ENCODE measurements at regions of chr2 and their contacts with region 1.

Region 1: DNA sequence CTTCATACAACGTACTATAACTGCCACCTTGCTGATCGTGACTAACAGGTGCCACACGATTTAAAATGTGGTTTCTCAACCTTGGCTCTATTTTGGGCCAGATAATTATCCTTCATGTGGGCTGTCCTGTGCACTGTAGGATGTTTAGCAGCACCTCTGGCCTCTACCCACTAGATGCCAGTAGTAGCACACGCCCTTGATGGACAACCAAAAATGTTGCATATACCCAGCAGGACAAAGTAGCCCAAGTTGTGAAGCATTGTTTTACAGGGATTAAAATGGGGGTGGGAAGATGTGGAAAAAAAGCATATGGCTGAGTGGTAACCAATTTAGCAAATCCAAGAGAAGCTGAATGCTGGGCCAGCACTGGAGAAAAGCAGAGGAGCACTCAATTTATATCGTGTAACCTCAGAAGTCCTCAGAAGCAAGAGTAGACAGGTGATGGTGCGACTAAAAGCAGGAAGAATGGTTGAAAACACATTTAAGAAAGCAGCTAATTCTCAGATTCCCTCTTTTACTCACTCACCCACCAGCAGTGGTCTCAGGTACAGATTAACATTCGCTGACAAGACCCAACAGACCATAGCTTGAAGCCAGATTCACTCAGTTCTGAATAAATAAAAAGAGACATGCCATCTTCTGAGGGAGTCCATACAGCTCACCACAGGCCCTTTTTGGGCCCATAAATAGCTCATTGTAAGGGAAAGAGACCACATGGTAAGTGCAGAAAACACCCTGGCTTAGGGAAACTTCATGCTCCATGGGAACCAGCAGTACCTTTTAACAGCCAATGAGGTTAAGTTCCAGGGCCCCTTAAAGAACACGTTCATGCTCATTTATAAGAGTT is 50.6 kb downstream of the RAPH1 start:
- DNase-seq: peak; percentile 46
- ATAC-seq: peak; percentile 94
- H3K4me3 ChIP-seq: no peak overlapping the region
- H3K27ac ChIP-seq: no peak overlapping the region
- H3K4me1 ChIP-seq: 0 out of 2 replicates have a peak, but pooled peaks cover under 1% of the 10 kb centered on the region
- H3K27me3 ChIP-seq: no peaks in the 10 kb centered on the region
- CTCF ChIP-seq: peak; percentile 77
- EP300 ChIP-seq: no peak
- POLR2A ChIP-seq: no peak
- RAD21 ChIP-seq: peak; percentile 83

Region 2: GRCh38 chr2:203909261-203909967 is 424.9 kb after region 1 on chr2:
- CTCF ChIA-PET with region 1: interaction called, 10 read pairs
- POLR2A ChIA-PET with region 1: no interaction called
- in situ Hi-C with region 1: loop called (anchors 10 kb)
- intact Hi-C with region 1: loop called (anchors 1 kb)
- DNase-seq: peak; percentile 41
- ATAC-seq: peak; percentile 92
- H3K4me3 ChIP-seq: peak overlapping the region in 1 of 3 experiments; percentile 9; a peak in 2 of 6 replicates
- H3K27ac ChIP-seq: no peak overlapping the region
- H3K4me1 ChIP-seq: peaks cover 20% of the 10 kb centered on the region; the same call in 1 of the 2 replicates
- H3K27me3 ChIP-seq: no peaks in the 10 kb centered on the region
- CTCF ChIP-seq: peak; percentile 74
- EP300 ChIP-seq: no peak
- POLR2A ChIP-seq: no peak
- RAD21 ChIP-seq: peak; percentile 75; the same call in 1 of the 2 replicates

Measured in HepG2 (cell line).